A549 (cell line): ENCODE measurements at regions of chr5 and their contacts with region 1.

Region 1: DNA sequence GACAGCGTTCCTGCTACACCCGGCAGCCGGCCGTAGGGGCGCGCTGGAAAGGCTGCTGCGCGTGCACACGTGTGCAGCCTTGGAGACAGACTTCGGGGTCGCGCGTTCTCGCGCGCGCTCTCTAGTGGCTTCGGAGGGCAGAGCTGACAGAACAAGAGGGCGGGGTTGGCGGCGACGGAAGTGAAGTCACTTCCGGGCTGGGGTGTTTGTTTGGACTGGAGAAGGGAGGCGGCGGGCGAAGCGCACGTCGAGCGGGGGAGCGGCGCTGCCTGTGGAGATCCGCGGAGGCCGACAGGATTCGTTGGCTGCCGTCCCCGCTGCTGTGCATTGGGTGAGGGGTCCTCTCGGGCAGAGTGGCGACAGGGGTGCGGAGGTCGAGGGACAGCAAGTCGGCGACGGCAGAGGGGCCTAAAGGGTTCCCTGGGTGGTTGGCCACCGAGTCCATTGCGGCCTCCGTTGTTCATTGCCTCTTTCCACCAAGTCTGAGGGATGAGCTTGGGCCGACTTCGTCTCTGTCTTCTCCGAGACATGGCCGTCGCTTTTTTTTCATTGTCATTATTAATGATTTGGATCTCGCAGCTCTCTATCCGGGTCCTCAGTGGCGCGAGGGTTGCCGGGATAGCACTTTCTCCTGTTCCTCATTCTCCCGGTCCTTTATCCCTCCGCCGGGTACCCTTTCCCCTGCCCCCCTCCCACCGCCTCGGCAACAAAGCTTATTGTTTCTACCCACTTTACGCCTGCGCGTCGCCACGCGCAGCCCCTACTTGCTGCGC is at the start of gene PAIP2:
- DNase-seq: peak; percentile 88 to 98
- ATAC-seq: peak; percentile 87 to 92
- H3K4me3 ChIP-seq: peak within 1 kb of the TSS; percentile 81
- H3K27ac ChIP-seq: peak within 1 kb of the TSS; percentile 90 to 91
- H3K4me1 ChIP-seq: peaks cover 19% of the 10 kb centered on the region; the same call in 2 of the 3 replicates
- CTCF ChIP-seq: peak; percentile 61
- EP300 ChIP-seq: no peak
- POLR2A ChIP-seq: peak; percentile 78
- RAD21 ChIP-seq: peak; percentile 45 to 58
- polyA plus RNA-seq, gene PAIP2: 91.4 and 128 TPM in 2 replicates

Region 2: DNA sequence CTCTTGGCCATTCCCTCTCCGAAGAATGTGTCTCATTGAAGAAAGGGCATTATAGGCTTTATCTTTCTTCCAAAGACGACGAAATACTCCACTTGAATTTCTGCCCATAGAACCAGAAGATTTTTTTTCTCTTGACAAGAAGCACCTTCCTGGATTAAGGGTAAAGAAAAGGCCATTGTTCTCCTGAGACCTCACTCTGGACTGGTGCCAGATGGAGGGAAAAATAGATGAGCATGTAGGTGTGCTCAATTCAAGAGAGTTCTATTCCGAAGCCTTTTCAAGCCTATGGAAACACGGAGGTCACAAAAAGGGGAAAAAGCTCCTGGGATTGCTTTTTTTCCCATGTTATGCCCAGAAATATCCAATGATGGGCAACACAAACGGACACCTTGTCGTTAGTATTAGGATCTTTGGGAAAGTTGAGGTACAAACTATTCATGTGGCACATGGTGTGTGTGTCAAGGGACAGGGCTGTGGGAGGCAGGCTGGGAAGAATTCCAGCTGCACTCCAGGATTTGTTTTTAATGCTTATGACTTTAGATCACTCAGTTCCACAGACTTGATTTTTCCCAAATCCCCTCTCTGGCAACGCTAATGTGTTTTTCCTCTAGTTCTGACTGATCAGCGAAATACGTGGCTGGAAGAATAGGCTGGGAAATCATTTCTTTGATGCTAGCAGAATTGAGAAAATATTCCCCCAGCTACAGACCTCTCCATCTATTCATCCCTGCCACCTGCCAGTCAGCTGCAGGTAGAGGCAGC is 233.6 kb before region 1 on chr5:
- CTCF ChIA-PET with region 1: no interaction called
- POLR2A ChIA-PET with region 1: no interaction called
- DNase-seq: no peak
- ATAC-seq: no peak
- H3K4me3 ChIP-seq: no peak overlapping the region
- H3K27ac ChIP-seq: no peak overlapping the region
- H3K4me1 ChIP-seq: no peaks in the 10 kb centered on the region
- CTCF ChIP-seq: no peak
- EP300 ChIP-seq: no peak
- POLR2A ChIP-seq: no peak
- RAD21 ChIP-seq: no peak

Region 3: DNA sequence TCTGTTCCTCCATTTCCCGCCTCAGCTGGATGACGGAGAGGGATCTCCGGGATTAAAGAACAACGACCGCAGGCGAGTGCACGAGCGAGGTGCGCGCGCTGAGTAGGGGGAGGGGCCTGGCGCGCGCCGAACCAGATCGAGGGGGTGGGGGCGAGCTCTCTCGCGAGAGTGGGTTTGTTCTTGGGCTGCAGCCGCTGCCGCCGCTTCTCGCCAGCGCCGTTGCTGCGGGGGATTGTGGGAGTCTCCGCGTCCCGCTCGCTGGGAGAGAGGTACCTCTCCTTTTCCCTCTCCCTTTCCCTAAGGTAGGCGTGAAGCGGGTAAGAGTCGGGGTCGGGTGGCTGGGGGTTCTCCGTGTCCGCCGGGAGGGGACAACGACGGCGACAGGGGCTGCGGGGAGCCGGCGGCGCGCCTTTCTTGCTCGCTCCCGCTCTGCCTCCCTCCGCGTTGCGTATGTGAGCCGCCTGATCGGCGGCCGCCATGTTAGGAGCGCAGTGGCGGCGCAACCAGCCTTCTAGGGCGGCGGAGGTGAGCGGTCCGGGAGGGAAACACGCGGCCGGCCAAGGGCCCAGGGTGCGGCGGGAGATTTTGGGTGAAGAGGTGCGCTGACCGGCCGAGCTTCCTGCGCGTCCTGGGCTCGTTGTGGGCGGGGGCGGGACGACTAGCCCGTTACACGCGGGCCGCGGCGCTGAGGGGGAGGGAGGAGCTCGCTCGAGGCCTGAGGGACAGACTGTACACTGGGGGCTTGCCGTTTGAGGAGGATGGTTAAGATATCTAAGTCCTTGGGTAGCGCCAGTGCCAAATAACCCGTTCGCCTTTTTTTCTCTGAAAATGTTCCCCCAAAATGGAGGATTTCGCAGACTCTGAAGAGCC is 48.1 kb before region 1 on chr5 and contains the start of gene MATR3:
- CTCF ChIA-PET with region 1: interaction called, 3 read pairs
- POLR2A ChIA-PET with region 1: interaction called, 38 read pairs
- DNase-seq: peak; percentile 93 to 97
- ATAC-seq: peak; percentile 88 to 89
- H3K4me3 ChIP-seq: peak within 1 kb of the TSS; percentile 66
- H3K27ac ChIP-seq: peak within 1 kb of the TSS; percentile 97 to 98
- H3K4me1 ChIP-seq: peaks cover 34% of the 10 kb centered on the region
- CTCF ChIP-seq: no peak
- EP300 ChIP-seq: no peak
- POLR2A ChIP-seq: peak; percentile 92
- RAD21 ChIP-seq: peak in 1 of 2 experiments; percentile 2; a peak in 2 of 5 replicates
- polyA plus RNA-seq, gene MATR3: 157 and 178 TPM in 2 replicates

Region 4: DNA sequence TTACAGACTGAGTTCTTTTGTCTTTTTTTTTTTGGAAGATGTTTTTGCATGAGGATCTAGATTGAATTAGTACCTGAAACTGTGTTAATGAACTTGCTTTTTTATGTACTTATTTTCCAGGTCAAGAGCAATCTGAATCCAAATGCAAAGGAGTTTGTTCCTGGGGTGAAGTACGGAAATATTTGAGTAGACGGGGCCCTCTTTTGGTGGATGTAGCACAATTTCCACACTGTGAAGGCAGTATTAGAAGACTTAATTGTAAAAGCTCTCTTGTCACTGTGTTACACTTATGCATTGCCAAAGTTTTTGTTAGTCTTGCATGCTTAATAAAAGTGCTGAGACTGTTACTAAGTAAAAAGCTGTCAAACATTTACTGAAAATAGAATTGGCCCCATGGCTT is 26.8 kb after region 1 on chr5:
- CTCF ChIA-PET with region 1: interaction called, 17 read pairs
- POLR2A ChIA-PET with region 1: interaction called, 12 read pairs
- DNase-seq: no peak
- ATAC-seq: peak in 1 of 2 experiments; percentile 33; a peak in 1 of 6 replicates
- H3K4me3 ChIP-seq: no peak overlapping the region
- H3K27ac ChIP-seq: no peak overlapping the region
- H3K4me1 ChIP-seq: peaks cover 16% of the 10 kb centered on the region
- CTCF ChIP-seq: peak; percentile 25; the same call in 1 of the 3 replicates
- EP300 ChIP-seq: no peak
- POLR2A ChIP-seq: no peak
- RAD21 ChIP-seq: peak; percentile 41 to 50; a peak in 3 of 5 replicates

Region 5: GRCh38 chr5:139374909-139375308 is 33.1 kb after region 1 on chr5:
- CTCF ChIA-PET with region 1: interaction called, 17 read pairs
- POLR2A ChIA-PET with region 1: interaction called, 12 read pairs
- DNase-seq: no peak
- ATAC-seq: 0 out of 6 replicates have a peak, but pooled peaks have one; percentile 2 to 10
- H3K4me3 ChIP-seq: no peak overlapping the region
- H3K27ac ChIP-seq: peak overlapping the region; percentile 25 to 73; a peak in 4 of 6 replicates
- H3K4me1 ChIP-seq: peaks cover 29% of the 10 kb centered on the region
- CTCF ChIP-seq: no peak
- EP300 ChIP-seq: no peak
- POLR2A ChIP-seq: no peak
- RAD21 ChIP-seq: no peak

Region 6: DNA sequence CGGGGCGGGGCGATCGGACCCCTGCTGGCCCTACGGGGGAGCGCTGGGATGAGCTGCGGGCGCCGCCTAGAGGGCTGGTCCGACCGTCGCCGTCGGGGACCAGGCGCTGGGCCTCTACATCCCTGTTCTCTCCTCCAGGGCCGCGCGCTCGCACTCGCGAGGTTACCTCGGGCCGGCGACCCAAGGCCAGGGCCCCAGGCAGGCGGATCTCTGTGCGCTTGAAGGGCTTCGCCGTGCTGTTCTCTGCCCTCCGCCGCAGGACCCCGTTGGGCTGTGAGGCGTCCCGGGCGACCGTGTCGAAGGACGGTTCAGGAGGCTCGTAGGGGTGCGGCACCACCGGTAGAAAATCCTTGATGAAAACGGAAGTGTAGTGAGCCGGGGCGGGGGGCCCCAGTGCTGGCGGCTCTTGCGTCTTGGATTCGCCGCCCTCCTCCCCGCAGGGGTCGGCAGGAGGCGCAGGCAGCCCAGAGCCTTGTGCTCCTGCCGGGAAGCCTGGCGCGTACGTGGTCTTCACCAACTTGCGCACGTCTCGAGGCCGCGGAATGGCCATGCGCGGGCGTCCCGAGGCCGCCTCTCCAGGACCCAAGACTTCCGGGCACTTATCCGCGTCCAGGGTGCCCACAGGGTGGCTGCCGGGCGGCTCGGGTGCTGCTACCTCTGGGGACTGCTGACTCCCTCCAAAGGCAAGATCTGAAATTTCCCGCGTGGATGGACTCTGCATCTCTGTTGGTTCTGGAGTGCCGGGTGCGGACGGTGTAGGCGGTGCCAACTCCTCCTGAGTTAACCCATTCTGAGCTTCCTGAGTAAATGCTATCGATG is 51.1 kb after region 1 on chr5:
- CTCF ChIA-PET with region 1: interaction called, 9 read pairs
- POLR2A ChIA-PET with region 1: interaction called, 18 read pairs
- DNase-seq: peak; percentile 85 to 92
- ATAC-seq: peak; percentile 75 to 89
- H3K4me3 ChIP-seq: peak overlapping the region; percentile 85
- H3K27ac ChIP-seq: peak overlapping the region; percentile 89 to 92
- H3K4me1 ChIP-seq: peaks cover 44% of the 10 kb centered on the region
- CTCF ChIP-seq: peak; percentile 86
- EP300 ChIP-seq: no peak
- POLR2A ChIP-seq: no peak
- RAD21 ChIP-seq: peak; percentile 87 to 96